CD8-positive, alpha-beta T cell (primary cell): ENCODE measurements at regions of chr19 and their contacts with region 1.

Region 1: GRCh38 chr19:46850228-46851203 is at the start of gene AP2S1:
- DNase-seq: peak; percentile 83 to 97 (median 92)
- ATAC-seq: peak; percentile 95
- H3K4me3 ChIP-seq: peak within 1 kb of the TSS; percentile 68 to 88
- H3K4me3 Mint-ChIP-seq: peak within 1 kb of the TSS; percentile 93
- H3K27ac ChIP-seq: peak within 1 kb of the TSS; percentile 44 to 68
- H3K27ac Mint-ChIP-seq: peak within 1 kb of the TSS; percentile 89
- H3K4me1 ChIP-seq: peaks cover 12% of the 10 kb centered on the region
- H3K4me1 Mint-ChIP-seq: peaks cover 31% of the 10 kb centered on the region
- H3K27me3 ChIP-seq: no peaks in the 10 kb centered on the region
- H3K27me3 Mint-ChIP-seq: no peaks in the 10 kb centered on the region
- CTCF ChIP-seq: no peak
- total RNA-seq, gene AP2S1: 21.3 to 26.1 TPM

Region 2: DNA sequence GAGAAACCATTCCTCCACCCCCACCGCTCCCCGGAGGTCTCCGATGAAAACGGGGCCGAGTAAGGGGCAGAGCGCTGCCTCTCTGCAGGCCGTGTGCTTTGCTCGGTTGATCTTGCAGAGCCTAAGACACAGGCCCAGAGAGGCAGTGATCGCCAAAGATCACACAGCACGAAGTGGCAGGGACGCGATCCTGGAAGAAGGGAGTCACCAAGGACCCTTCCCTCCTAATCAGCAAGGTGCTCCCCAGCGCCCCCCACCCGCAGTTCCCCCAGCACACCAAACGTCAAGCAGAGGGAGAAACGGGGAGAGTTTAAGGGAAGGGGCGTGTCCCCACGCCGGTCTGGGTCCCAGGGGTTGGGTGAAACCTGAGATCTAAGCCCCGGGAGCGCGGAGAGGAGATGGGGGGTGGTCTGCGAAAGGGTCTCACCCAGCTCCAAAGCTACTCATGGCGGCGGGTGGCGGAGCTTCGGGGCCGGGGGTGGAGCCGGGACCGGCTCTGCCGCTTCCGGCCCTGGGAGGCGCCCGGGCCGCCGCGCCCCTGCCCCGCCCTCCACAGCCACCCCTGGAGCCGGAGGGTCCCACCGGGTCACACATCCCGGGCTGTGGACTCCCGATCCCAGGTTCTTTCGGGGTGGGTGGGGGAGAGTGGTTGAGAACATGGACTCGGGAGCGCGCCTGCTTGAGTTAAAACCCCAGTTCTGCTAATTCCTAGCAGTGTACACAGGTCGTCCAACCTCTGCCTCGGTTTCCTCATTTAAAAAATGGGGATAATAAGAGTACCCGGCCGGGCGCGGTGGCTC is 1211.4 kb before region 1 on chr19 and contains the start of gene EML2:
- CTCF ChIA-PET with region 1: no interaction called
- POLR2A ChIA-PET with region 1: no interaction called
- intact Hi-C with region 1: no loop called
- DNase-seq: peak in 8 of 9 experiments; percentile 41 to 72 (median 56)
- ATAC-seq: peak; percentile 29
- H3K4me3 ChIP-seq: peak within 1 kb of the TSS; percentile 83
- H3K4me3 Mint-ChIP-seq: peak within 1 kb of the TSS; percentile 92
- H3K27ac ChIP-seq: peak within 1 kb of the TSS; percentile 58 to 65
- H3K27ac Mint-ChIP-seq: peak within 1 kb of the TSS; percentile 88
- H3K4me1 ChIP-seq: peaks cover 37% of the 10 kb centered on the region
- H3K4me1 Mint-ChIP-seq: peaks cover 35% of the 10 kb centered on the region
- H3K27me3 ChIP-seq: no peaks in the 10 kb centered on the region
- H3K27me3 Mint-ChIP-seq: no peaks in the 10 kb centered on the region
- CTCF ChIP-seq: no peak
- total RNA-seq, gene EML2: 24.0 to 26.5 TPM

Region 3: GRCh38 chr19:46283771-46284170 is 566.7 kb before region 1 on chr19:
- CTCF ChIA-PET with region 1: no interaction called
- POLR2A ChIA-PET with region 1: no interaction called
- intact Hi-C with region 1: no loop called
- DNase-seq: no peak
- ATAC-seq: no peak
- H3K4me3 ChIP-seq: no peak overlapping the region
- H3K4me3 Mint-ChIP-seq: no peak overlapping the region
- H3K27ac ChIP-seq: no peak overlapping the region
- H3K27ac Mint-ChIP-seq: no peak overlapping the region
- H3K4me1 ChIP-seq: no peaks in the 10 kb centered on the region
- H3K4me1 Mint-ChIP-seq: no peaks in the 10 kb centered on the region
- H3K27me3 ChIP-seq: no peaks in the 10 kb centered on the region
- H3K27me3 Mint-ChIP-seq: peaks cover 9% of the 10 kb centered on the region
- CTCF ChIP-seq: no peak

Region 4: GRCh38 chr19:46571531-46571930 is 279.0 kb before region 1 on chr19:
- CTCF ChIA-PET with region 1: no interaction called
- POLR2A ChIA-PET with region 1: no interaction called
- intact Hi-C with region 1: no loop called
- DNase-seq: peak in 2 of 9 experiments; percentile 9 to 27
- ATAC-seq: peak; percentile 55
- H3K4me3 ChIP-seq: no peak overlapping the region
- H3K4me3 Mint-ChIP-seq: no peak overlapping the region
- H3K27ac ChIP-seq: no peak overlapping the region
- H3K27ac Mint-ChIP-seq: no peak overlapping the region
- H3K4me1 ChIP-seq: peaks cover 10% of the 10 kb centered on the region
- H3K4me1 Mint-ChIP-seq: peaks cover 16% of the 10 kb centered on the region
- H3K27me3 ChIP-seq: no peaks in the 10 kb centered on the region
- H3K27me3 Mint-ChIP-seq: peaks cover 12% of the 10 kb centered on the region
- CTCF ChIP-seq: no peak

Region 5: DNA sequence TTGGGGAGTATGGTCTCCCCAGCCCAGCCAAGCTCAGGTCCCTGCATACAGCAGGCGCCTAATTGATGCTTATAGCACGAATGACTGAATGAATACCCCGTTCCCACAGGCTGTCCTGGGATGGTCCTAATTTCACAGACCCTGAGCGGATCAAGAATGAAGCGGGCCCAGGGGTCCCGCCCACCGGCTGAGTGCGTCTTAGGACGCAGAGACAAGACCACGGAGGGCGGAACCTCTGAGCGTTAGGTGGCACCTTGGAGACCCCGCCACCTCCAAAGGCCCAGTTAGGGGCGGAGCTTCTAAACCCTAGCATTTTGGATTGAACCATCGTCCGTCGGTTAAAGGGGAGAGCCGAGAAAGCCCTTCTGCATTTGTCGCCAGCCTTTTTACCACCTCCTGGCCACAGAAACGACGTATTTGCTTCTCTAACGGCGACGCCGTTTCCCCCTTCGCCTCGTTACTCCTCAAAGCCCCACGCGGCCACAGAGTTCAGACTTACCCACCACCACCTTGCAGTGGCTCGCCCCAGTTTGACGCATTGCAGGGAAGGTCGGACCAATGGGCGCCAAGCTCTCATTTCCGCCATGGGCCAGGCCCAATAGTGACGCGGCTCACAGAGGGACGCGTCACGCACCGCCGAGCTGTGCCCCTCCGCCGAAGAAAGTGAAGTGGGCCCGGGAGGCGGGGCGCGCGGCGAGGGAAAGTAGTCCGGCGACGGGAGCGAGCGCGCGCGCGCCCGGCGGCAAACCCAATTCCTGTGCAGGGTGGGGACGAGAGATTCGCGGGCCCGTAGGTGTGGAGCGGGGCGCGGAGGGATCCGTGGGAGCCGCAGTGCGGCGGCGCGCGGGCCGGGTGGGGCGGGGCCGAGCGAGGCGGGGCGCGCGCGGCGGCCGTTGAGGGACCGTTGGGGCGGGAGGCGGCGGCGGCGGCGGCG is 249.9 kb before region 1 on chr19:
- CTCF ChIA-PET with region 1: no interaction called
- POLR2A ChIA-PET with region 1: no interaction called
- intact Hi-C with region 1: loop called (anchors 5 to 10 kb)
- DNase-seq: peak; percentile 95 to 99 (median 97)
- ATAC-seq: peak; percentile 89
- H3K4me3 ChIP-seq: peak overlapping the region; percentile 88 to 99
- H3K4me3 Mint-ChIP-seq: peak overlapping the region; percentile 96
- H3K27ac ChIP-seq: peak overlapping the region; percentile 100
- H3K27ac Mint-ChIP-seq: peak overlapping the region; percentile 100
- H3K4me1 ChIP-seq: peaks cover 34% of the 10 kb centered on the region
- H3K4me1 Mint-ChIP-seq: peaks cover 38% of the 10 kb centered on the region
- H3K27me3 ChIP-seq: no peaks in the 10 kb centered on the region
- H3K27me3 Mint-ChIP-seq: no peaks in the 10 kb centered on the region
- CTCF ChIP-seq: no peak

Region 6: GRCh38 chr19:46717034-46717723 is 133.3 kb before region 1 on chr19 and contains the start of gene PRKD2:
- CTCF ChIA-PET with region 1: no interaction called
- POLR2A ChIA-PET with region 1: no interaction called
- intact Hi-C with region 1: loop called in 1 of 2 experiments (anchors 1 kb)
- DNase-seq: peak; percentile 60 to 91 (median 86)
- ATAC-seq: peak; percentile 51
- H3K4me3 ChIP-seq: peak within 1 kb of the TSS; percentile 71 to 73
- H3K4me3 Mint-ChIP-seq: peak within 1 kb of the TSS; percentile 92
- H3K27ac ChIP-seq: peak within 1 kb of the TSS; percentile 77 to 94
- H3K27ac Mint-ChIP-seq: peak within 1 kb of the TSS; percentile 99
- H3K4me1 ChIP-seq: peaks cover 37% of the 10 kb centered on the region
- H3K4me1 Mint-ChIP-seq: peaks cover 45% of the 10 kb centered on the region
- H3K27me3 ChIP-seq: no peaks in the 10 kb centered on the region
- H3K27me3 Mint-ChIP-seq: no peaks in the 10 kb centered on the region
- CTCF ChIP-seq: no peak
- total RNA-seq, gene PRKD2: 81.1 to 89.7 TPM

Region 7: DNA sequence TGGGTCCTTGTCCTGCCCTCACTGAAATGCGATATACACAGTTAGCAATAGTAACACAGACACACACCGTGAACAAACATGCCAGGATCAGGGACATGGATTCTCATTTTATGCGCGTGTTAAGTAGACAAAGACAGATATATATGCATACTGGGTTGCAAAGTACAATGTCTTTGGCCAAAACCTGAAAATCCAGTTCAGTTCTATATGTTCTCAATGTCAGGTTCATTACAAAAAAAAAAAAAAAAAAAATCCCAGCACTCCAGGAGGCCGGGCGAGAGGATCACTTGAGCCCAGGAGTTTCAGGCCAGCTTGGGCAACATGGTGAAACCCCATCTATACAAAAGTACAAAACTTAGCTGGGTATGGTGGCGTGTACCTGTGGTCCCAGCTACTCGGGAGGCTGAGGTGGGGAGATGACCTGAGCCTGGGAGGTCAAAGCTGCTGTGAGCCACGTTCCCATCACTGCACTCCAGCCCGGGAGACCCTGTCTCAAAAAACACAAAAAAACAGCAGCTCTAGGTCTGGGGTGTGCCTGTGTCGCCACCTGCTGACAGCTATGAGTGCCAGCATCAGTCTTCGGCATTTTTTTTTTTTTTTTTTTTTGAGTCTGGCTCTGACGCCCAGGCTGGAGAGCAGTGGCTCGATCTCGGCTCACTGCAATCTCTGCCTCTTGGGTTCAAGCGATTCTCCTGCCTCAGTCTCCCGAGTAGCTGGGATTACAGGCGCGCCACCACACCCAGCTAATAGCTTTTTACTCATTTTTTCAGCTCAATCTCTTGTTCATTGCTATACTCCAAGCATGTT is 10.2 kb before region 1 on chr19:
- CTCF ChIA-PET with region 1: interaction called, 11 read pairs
- POLR2A ChIA-PET with region 1: interaction called, 4 read pairs
- intact Hi-C with region 1: no loop called
- DNase-seq: peak in 6 of 9 experiments; percentile 52 to 83 (median 62)
- ATAC-seq: peak; percentile 95
- H3K4me3 ChIP-seq: no peak overlapping the region
- H3K4me3 Mint-ChIP-seq: no peak overlapping the region
- H3K27ac ChIP-seq: no peak overlapping the region
- H3K27ac Mint-ChIP-seq: no peak overlapping the region
- H3K4me1 ChIP-seq: no peaks in the 10 kb centered on the region
- H3K4me1 Mint-ChIP-seq: no peaks in the 10 kb centered on the region
- H3K27me3 ChIP-seq: no peaks in the 10 kb centered on the region
- H3K27me3 Mint-ChIP-seq: no peaks in the 10 kb centered on the region
- CTCF ChIP-seq: peak; percentile 77

Region 8: DNA sequence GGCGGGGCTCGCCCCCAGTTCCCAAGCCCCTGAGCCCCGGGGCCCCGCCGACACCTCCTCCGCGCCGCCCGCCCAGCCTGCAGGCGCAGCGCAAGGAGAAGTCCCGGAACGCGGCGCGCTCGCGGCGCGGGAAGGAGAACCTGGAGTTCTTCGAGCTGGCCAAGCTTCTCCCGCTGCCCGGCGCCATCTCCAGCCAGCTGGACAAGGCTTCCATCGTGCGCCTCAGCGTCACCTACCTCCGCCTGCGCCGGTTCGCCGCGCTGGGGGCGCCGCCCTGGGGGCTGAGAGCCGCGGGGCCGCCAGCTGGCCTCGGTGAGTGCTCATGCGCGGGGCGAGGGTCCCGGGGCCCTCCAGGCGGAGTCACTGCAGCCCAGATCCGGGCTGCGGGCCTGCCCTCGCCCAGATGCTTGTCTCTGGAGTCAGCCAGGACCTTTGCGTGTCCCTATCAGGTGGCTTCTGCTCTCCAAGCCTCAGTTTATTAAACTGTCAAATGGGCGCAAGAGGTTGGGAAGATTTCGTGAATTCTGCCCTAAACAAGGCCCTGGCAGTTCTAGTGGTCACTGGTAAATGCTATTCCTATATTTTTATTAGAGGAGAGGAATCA is 171.1 kb after region 1 on chr19:
- CTCF ChIA-PET with region 1: no interaction called
- POLR2A ChIA-PET with region 1: no interaction called
- intact Hi-C with region 1: no loop called
- DNase-seq: no peak
- ATAC-seq: no peak
- H3K4me3 ChIP-seq: peak overlapping the region in 1 of 2 experiments; percentile 11
- H3K4me3 Mint-ChIP-seq: no peak overlapping the region
- H3K27ac ChIP-seq: no peak overlapping the region
- H3K27ac Mint-ChIP-seq: no peak overlapping the region
- H3K4me1 ChIP-seq: peaks cover 26% of the 10 kb centered on the region
- H3K4me1 Mint-ChIP-seq: peaks cover 17% of the 10 kb centered on the region
- H3K27me3 ChIP-seq: peaks cover 28 to 32% of the 10 kb centered on the region in 2 experiments
- H3K27me3 Mint-ChIP-seq: peaks cover 40% of the 10 kb centered on the region
- CTCF ChIP-seq: no peak

Region 9: GRCh38 chr19:47047763-47048405 is 197.4 kb after region 1 on chr19:
- CTCF ChIA-PET with region 1: no interaction called
- POLR2A ChIA-PET with region 1: no interaction called
- intact Hi-C with region 1: loop called (anchors 1 kb)
- DNase-seq: peak; percentile 22 to 85 (median 65)
- ATAC-seq: peak; percentile 37
- H3K4me3 ChIP-seq: peak overlapping the region; percentile 67 to 96
- H3K4me3 Mint-ChIP-seq: peak overlapping the region; percentile 98
- H3K27ac ChIP-seq: peak overlapping the region; percentile 31 to 62
- H3K27ac Mint-ChIP-seq: peak overlapping the region; percentile 91
- H3K4me1 ChIP-seq: peaks cover 8% of the 10 kb centered on the region
- H3K4me1 Mint-ChIP-seq: peaks cover 20% of the 10 kb centered on the region
- H3K27me3 ChIP-seq: no peaks in the 10 kb centered on the region
- H3K27me3 Mint-ChIP-seq: no peaks in the 10 kb centered on the region
- CTCF ChIP-seq: no peak

Region 10: DNA sequence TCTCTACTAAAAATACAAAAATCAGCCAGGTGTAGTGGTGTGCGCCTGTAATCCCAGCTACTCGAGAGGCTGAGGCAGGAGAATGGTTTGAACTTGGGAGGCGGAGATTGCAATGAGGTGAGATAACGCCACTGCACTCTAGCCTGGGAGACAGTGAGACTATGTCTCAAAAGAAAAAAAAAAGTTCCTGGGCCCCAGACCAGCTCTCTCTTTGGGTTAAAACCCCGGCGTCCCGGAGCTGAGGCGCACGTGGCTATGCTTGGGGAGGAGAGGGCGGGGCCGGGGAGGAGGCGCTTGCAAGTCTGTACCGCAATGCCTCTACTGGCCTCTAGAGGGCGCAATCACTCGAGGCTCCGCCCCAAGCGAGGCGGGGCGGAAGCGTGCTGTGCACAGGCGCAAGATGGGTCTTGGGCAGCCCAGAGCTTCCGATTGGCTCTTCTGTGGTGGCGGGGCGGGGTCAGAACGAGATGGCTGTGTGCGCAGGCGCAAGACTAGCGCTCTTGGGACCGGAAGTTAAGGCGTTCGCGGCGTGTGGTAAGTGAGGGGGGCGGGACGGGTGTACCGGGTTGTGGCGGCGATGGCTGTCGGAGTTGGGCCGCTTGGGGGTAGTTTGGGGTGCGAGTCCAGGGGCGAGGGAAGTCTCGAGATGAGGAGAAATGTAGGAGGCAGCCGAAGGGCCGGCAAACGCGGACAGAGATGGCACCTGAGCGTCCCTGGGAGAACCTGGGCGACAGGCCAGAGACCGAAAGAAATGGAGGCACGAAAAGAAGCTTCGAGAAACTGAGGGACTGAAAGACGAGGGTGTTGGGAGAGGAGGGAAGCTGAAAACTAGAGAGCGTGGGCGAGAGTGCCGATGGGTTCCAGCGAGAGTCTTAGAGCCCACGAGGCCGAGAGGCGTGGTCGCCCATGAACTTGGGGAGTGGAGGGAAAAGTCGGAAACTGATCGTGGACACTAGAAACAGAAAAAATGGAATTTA is 498.6 kb after region 1 on chr19 and contains the start of gene DHX34:
- CTCF ChIA-PET with region 1: no interaction called
- POLR2A ChIA-PET with region 1: no interaction called
- intact Hi-C with region 1: loop called in 1 of 2 experiments (anchors 10 kb)
- DNase-seq: peak; percentile 98 to 100 (median 99)
- ATAC-seq: peak; percentile 98
- H3K4me3 ChIP-seq: peak within 1 kb of the TSS; percentile 88 to 93
- H3K4me3 Mint-ChIP-seq: peak within 1 kb of the TSS; percentile 98
- H3K27ac ChIP-seq: peak within 1 kb of the TSS; percentile 71 to 72
- H3K27ac Mint-ChIP-seq: peak within 1 kb of the TSS; percentile 91
- H3K4me1 ChIP-seq: peaks cover 25% of the 10 kb centered on the region
- H3K4me1 Mint-ChIP-seq: peaks cover 38% of the 10 kb centered on the region
- H3K27me3 ChIP-seq: no peaks in the 10 kb centered on the region
- H3K27me3 Mint-ChIP-seq: peaks cover 3% of the 10 kb centered on the region
- CTCF ChIP-seq: peak; percentile 72
- total RNA-seq, gene DHX34: 7.7 to 8.1 TPM

Region 11: DNA sequence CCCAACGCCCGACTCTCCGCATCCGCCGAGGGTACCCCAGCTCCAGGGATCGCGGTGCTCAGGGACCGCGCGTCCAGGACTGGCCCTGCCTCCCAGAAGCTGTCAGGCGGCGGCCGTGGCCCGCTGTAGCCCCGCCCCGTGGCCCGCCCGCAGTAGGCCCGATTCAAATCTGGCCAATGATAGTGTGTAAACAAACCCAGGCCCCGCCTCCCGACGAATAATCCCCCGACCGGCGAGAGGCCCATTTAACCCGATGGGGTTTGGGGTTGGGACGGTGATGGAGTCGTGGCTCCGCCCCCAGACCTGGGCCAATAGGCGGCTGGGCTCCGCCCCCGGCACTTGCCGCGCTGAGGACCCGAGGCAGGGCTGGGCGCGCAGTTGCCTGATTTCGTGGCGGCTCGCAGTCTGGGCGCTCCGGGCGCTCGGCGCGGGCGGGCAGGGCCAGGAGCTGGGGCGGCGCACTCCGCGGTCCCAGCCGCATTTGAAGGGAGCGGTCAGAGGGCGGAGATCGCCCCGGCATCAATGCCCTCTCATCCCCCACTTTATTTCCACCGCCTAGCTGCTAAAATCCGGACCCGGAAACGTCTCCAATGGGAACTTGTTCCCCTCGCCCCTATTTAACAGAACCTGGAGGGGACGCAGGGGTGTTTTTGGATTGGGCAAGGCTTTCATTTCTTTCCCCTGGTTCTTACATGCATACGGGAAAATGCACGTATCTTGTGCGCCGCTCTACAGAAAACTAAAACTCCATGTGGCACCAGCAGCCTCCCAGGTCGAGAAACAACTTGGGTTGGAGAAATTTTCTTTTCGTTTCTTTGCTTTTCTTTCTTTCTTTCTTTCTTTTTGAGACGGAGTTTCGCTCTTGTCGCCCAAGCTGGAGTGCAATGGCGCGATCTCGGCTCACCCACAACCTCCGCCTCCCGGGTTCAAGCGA is 750.0 kb after region 1 on chr19:
- CTCF ChIA-PET with region 1: no interaction called
- POLR2A ChIA-PET with region 1: no interaction called
- intact Hi-C with region 1: loop called in 1 of 2 experiments (anchors 10 kb)
- DNase-seq: peak; percentile 99 to 100 (median 100)
- ATAC-seq: peak; percentile 97
- H3K4me3 ChIP-seq: peak overlapping the region; percentile 77 to 93
- H3K4me3 Mint-ChIP-seq: peak overlapping the region; percentile 82
- H3K27ac ChIP-seq: peak overlapping the region; percentile 80 to 83
- H3K27ac Mint-ChIP-seq: peak overlapping the region; percentile 81
- H3K4me1 ChIP-seq: peaks cover 10% of the 10 kb centered on the region
- H3K4me1 Mint-ChIP-seq: peaks cover 26% of the 10 kb centered on the region
- H3K27me3 ChIP-seq: no peaks in the 10 kb centered on the region
- H3K27me3 Mint-ChIP-seq: no peaks in the 10 kb centered on the region
- CTCF ChIP-seq: no peak